ENCODE measurements at regions of chr4 and their contacts with region 1.

Region 1: GRCh38 chr4:139030614-139031235 is 15.1 kb downstream of the NOCT start:
- DNase-seq: peak; percentile 51 to 66
- ATAC-seq: peak in 3 of 4 donors; percentile 47 to 65 (median 51)
- H3K4me3 ChIP-seq: no peak overlapping the region
- H3K27ac ChIP-seq: peak overlapping the region; percentile 88
- H3K4me1 ChIP-seq: peaks cover 28% of the 10 kb centered on the region
- H3K27me3 ChIP-seq: no peaks in the 10 kb centered on the region
- CTCF ChIP-seq: peak; percentile 84

Region 2: GRCh38 chr4:139076016-139076744 is 45.5 kb after region 1 on chr4:
- intact Hi-C with region 1: loop called (anchors 5 kb)
- DNase-seq: no peak
- ATAC-seq: peak; percentile 87 to 91 (median 88)
- H3K4me3 ChIP-seq: peak overlapping the region; percentile 40
- H3K27ac ChIP-seq: peak overlapping the region; percentile 98
- H3K4me1 ChIP-seq: peaks cover 57% of the 10 kb centered on the region
- H3K27me3 ChIP-seq: no peaks in the 10 kb centered on the region
- CTCF ChIP-seq: no peak

Region 3: GRCh38 chr4:139083956-139084803 is 53.5 kb after region 1 on chr4:
- intact Hi-C with region 1: loop called (anchors 2 to 5 kb)
- DNase-seq: peak; percentile 88 to 96
- ATAC-seq: peak; percentile 73 to 80 (median 79)
- H3K4me3 ChIP-seq: peak overlapping the region; percentile 83
- H3K27ac ChIP-seq: peak overlapping the region; percentile 98
- H3K4me1 ChIP-seq: peaks cover 43% of the 10 kb centered on the region
- H3K27me3 ChIP-seq: no peaks in the 10 kb centered on the region
- CTCF ChIP-seq: peak; percentile 43

Region 4: DNA sequence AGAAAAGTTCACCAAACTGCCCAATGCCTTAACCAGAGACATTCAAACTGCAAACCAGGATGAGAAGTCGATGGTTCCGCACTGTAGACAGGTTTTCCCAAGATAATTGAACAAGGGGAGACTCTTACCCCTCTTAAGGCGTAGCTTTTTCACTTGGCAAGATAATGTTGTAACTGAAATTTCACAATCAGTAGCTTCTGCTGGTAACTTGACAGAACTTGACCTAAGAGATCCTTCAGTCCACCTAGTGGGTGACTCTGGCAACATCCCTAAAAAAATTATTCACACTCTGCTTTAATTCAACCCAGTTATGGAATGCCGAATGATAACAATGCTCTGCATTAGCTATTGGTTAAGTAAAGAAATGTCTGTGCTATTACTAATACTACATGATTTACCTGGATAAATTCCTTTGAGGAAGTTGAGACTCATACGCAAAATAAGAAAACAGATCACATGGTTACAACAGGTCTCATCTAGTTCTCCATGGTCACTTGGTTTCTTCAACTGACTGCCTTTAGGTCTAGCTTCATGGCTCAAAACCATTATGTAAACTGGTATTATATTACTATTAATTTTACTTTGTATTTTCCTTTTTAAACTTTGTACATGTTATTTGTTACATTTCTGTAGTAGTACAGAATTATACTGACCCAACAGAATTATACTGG is 137.2 kb after region 1 on chr4:
- intact Hi-C with region 1: loop called (anchors 10 kb)
- DNase-seq: no peak
- ATAC-seq: peak; percentile 62 to 84 (median 78)
- H3K4me3 ChIP-seq: no peak overlapping the region
- H3K27ac ChIP-seq: peak overlapping the region; percentile 28
- H3K4me1 ChIP-seq: peaks cover 47% of the 10 kb centered on the region
- H3K27me3 ChIP-seq: no peaks in the 10 kb centered on the region
- CTCF ChIP-seq: peak; percentile 60

Region 5: DNA sequence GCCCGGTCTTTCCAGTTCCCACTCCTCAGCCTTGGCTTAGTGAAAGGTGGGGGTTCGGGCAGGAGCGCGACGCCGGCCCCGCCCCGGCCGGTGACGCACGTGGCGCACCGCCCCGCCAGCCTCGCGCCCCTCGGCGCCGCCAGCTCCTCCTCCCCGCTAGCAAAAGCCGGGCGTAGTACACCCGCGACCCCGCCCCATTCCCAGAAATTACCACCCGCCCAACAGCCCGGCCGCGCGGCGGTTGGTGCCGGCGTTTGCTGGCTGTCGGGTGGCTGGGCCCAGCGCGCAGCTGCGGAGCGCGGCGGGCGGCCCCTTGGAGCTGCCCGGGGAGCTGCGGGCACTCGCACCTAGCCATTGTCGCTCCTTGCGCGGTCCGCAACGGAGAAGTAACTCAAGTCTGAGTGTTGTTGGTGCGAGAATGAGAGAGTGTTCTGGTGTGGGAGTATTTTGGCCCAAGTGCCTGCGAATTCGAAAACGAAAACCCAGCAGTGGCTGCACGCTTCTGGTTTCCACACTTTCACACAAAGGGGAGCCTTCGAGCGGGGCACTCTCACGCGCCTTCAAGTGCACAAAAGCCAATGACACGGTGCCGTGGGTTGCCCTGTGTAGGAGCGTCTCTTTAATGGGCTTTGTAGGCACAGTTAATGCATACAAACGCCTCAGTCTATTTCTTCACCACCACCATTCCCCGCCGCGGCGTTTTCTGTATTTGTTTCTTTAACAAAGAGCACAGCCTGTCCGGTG is 147.3 kb after region 1 on chr4:
- intact Hi-C with region 1: loop called in 1 of 2 experiments (anchors 10 kb)
- DNase-seq: peak; percentile 96 to 98
- ATAC-seq: peak; percentile 80 to 88 (median 82)
- H3K4me3 ChIP-seq: peak overlapping the region; percentile 99
- H3K27ac ChIP-seq: peak overlapping the region; percentile 100
- H3K4me1 ChIP-seq: peaks cover 18% of the 10 kb centered on the region
- H3K27me3 ChIP-seq: no peaks in the 10 kb centered on the region
- CTCF ChIP-seq: no peak

Region 6: DNA sequence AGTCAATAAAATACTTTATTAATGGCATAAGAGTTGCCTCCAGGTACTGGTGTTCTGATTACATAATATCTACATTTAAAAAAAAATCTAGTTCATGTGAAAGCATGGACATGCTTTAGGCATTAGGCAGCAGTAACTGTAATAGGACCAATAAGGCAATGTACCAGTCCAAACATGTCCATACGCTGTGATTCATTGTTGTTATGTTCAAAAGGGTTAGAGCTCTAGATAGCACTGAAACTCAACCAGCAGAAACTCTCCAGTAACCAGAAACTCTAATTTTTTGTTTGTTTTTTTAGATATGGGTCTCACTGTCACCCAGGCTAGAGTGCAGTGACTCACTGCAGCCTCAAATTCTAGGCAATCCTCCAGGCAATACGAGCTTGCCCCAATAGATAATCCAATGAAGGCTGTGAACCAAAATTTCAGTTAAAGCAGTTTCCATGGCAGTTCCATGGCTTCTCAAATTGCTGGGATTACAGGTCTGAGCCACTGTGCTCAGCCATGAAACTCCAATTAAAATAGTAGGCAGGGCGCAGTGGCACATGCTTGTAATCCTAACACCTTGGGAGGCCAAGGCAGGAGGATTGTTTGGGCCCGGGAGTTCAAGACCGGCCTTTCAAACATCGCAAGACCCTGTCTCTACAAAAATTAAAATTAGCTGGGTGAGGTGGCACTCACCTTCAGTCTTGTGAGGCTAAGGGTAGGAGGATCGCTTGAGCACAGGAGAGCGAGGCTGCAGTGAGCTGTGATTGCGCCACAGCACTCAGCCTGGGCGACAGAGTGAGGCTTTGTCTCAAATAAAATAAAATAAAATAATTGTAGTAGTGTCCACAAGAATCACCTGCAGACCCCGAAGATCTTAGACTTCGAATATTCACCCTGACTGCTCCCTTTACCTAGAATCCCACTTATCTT is 213.0 kb after region 1 on chr4:
- intact Hi-C with region 1: no loop called
- DNase-seq: no peak
- ATAC-seq: peak; percentile 84 to 96 (median 90)
- H3K4me3 ChIP-seq: no peak overlapping the region
- H3K27ac ChIP-seq: peak overlapping the region; percentile 86
- H3K4me1 ChIP-seq: peaks cover 15% of the 10 kb centered on the region
- H3K27me3 ChIP-seq: no peaks in the 10 kb centered on the region
- CTCF ChIP-seq: no peak

Region 7: GRCh38 chr4:139295206-139295941 is 264.6 kb after region 1 on chr4:
- intact Hi-C with region 1: loop called (anchors 5 kb)
- DNase-seq: peak; percentile 97 to 99
- ATAC-seq: peak; percentile 83 to 90 (median 88)
- H3K4me3 ChIP-seq: peak overlapping the region; percentile 91
- H3K27ac ChIP-seq: peak overlapping the region; percentile 99
- H3K4me1 ChIP-seq: peaks cover 44% of the 10 kb centered on the region
- H3K27me3 ChIP-seq: no peaks in the 10 kb centered on the region
- CTCF ChIP-seq: peak; percentile 98

Region 8: GRCh38 chr4:139530833-139531427 is 500.2 kb after region 1 on chr4:
- intact Hi-C with region 1: loop called in 1 of 2 experiments (anchors 10 kb)
- DNase-seq: peak in 1 of 2 donors; percentile 31
- ATAC-seq: peak; percentile 43 to 71 (median 64)
- H3K4me3 ChIP-seq: no peak overlapping the region
- H3K27ac ChIP-seq: peak overlapping the region; percentile 5
- H3K4me1 ChIP-seq: peaks cover 29% of the 10 kb centered on the region
- H3K27me3 ChIP-seq: no peaks in the 10 kb centered on the region
- CTCF ChIP-seq: peak; percentile 66